Activated CD4-positive, alpha-beta T cell treated with anti-CD3 and anti-CD28 coated beads for 36 hours (primary cell): ENCODE measurements at regions of chr10 and their contacts with region 1.

Region 1: GRCh38 chr10:58275908-58276307 is 6.9 kb downstream of the CISD1 start:
- DNase-seq: no peak
- ATAC-seq: no peak
- H3K4me3 Mint-ChIP-seq: no peak overlapping the region
- H3K27ac Mint-ChIP-seq: no peak overlapping the region
- H3K4me1 Mint-ChIP-seq: peaks cover 27% of the 10 kb centered on the region
- H3K27me3 Mint-ChIP-seq: no peaks in the 10 kb centered on the region

Region 2: DNA sequence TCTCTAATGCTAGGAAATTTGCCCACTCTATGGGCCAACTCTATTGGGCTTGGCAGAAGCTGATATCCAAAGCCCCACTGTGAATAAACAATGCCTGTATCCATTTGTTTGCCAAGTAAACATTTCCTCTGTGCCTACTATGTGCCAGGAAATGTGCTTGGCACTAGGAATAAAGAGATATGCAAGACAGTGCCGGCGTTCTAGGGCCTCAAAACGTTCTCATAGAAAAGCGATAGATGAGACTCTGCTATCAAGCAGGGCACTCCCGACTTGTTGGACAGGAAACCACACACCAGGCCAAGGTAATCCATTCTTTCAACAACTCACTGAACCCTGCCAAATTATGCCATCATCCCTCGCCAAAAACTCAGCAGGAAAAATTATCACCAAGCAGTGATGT is 205.0 kb before region 1 on chr10:
- CTCF ChIA-PET with region 1: no interaction called
- POLR2A ChIA-PET with region 1: no interaction called
- intact Hi-C with region 1: no loop called
- DNase-seq: no peak
- ATAC-seq: no peak
- H3K4me3 Mint-ChIP-seq: no peak overlapping the region
- H3K27ac Mint-ChIP-seq: no peak overlapping the region
- H3K4me1 Mint-ChIP-seq: no peaks in the 10 kb centered on the region
- H3K27me3 Mint-ChIP-seq: peaks cover 14% of the 10 kb centered on the region

Region 3: DNA sequence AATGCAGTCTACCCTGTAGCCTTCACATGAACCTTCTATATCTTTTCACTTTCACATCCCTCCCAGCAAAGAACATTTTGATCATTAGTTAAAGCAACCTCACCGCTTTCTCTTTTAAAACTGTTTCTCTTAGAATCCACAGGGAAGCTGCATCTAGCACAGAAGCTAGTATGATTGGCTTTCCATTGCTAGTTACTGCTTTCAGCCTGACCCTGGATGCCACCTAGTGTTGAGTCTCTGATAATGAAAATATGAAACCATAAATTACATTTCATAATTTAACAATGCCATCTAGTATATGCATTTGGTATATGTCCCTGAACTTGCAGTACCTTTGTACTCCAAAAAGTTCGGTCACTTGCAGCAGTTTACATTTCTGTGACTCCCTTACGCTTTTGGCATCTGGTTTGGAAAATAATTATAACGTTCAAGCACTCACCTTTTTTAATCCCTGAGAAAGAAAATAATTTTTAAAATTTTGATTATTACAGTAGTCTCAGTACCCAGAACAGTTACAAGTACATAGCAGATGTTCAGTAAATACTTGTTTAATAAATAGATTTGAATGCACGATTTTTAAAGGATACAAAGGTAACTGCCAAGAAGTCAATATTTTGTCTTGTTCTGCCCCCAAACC is 15.7 kb after region 1 on chr10:
- CTCF ChIA-PET with region 1: interaction called, 10 read pairs
- POLR2A ChIA-PET with region 1: no interaction called
- intact Hi-C with region 1: no loop called
- DNase-seq: peak; percentile 50
- ATAC-seq: peak; percentile 71
- H3K4me3 Mint-ChIP-seq: no peak overlapping the region
- H3K27ac Mint-ChIP-seq: no peak overlapping the region
- H3K4me1 Mint-ChIP-seq: no peaks in the 10 kb centered on the region
- H3K27me3 Mint-ChIP-seq: no peaks in the 10 kb centered on the region